ENCODE measurements at regions of chr11 and their contacts with region 1.

Region 1: GRCh38 chr11:60880643-60881282 is 13.4 kb downstream of the ZP1 start:
- DNase-seq: peak; percentile 96
- ATAC-seq: peak; percentile 100
- H3K4me3 ChIP-seq: 0 out of 6 replicates have a peak overlapping the region, but pooled peaks of 1 of the 3 experiments have one; percentile 11
- H3K27ac ChIP-seq: peak overlapping the region; percentile 16
- H3K4me1 ChIP-seq: peaks cover 25% of the 10 kb centered on the region
- H3K27me3 ChIP-seq: no peaks in the 10 kb centered on the region
- CTCF ChIP-seq: 0 out of 2 replicates have a peak, but pooled peaks have one; percentile 17
- EP300 ChIP-seq: peak; percentile 66 to 89; a peak in 3 of 4 replicates
- POLR2A ChIP-seq: no peak
- RAD21 ChIP-seq: no peak

Region 2: DNA sequence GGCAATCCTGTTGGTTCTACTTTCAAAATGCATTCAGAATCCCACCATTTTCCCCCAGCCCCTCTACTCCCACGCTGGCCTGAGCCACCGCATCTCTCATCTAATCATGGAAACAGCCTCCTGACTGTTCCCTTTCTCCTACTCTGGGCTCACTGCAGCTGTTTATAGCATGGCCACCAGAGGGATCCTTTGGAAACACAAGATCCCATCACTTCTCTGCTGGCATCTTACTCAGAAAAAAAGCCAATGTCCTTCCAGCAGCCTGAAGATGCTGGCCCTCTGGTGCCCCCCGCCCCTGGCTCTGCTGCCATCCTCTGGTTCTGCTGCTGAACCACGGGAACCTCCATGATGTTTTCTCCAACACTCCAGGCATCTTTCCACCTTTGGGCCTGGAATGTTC is 170.3 kb before region 1 on chr11:
- CTCF ChIA-PET with region 1: no interaction called
- POLR2A ChIA-PET with region 1: no interaction called
- in situ Hi-C with region 1: no loop called
- intact Hi-C with region 1: no loop called
- DNase-seq: no peak
- ATAC-seq: peak; percentile 74
- H3K4me3 ChIP-seq: no peak overlapping the region
- H3K27ac ChIP-seq: no peak overlapping the region
- H3K4me1 ChIP-seq: no peaks in the 10 kb centered on the region
- H3K27me3 ChIP-seq: peaks cover 0 to 14% of the 10 kb centered on the region in 2 experiments; a peak in 1 of 5 replicates
- CTCF ChIP-seq: no peak
- EP300 ChIP-seq: no peak
- POLR2A ChIP-seq: no peak
- RAD21 ChIP-seq: no peak

Region 3: GRCh38 chr11:60739114-60739513 is 141.6 kb before region 1 on chr11:
- CTCF ChIA-PET with region 1: no interaction called
- POLR2A ChIA-PET with region 1: no interaction called
- in situ Hi-C with region 1: no loop called
- intact Hi-C with region 1: no loop called
- DNase-seq: no peak
- ATAC-seq: peak; percentile 65
- H3K4me3 ChIP-seq: no peak overlapping the region
- H3K27ac ChIP-seq: no peak overlapping the region
- H3K4me1 ChIP-seq: no peaks in the 10 kb centered on the region
- H3K27me3 ChIP-seq: peaks cover 0 to 4% of the 10 kb centered on the region in 2 experiments; a peak in 3 of 5 replicates
- CTCF ChIP-seq: no peak
- EP300 ChIP-seq: no peak
- POLR2A ChIP-seq: no peak
- RAD21 ChIP-seq: no peak

Region 4: GRCh38 chr11:60844045-60844869 is 36.5 kb before region 1 on chr11:
- CTCF ChIA-PET with region 1: no interaction called
- POLR2A ChIA-PET with region 1: interaction called, 4 read pairs
- in situ Hi-C with region 1: no loop called
- intact Hi-C with region 1: loop called (anchors 2 kb)
- DNase-seq: no peak
- ATAC-seq: peak; percentile 53
- H3K4me3 ChIP-seq: peak overlapping the region; percentile 80 to 97 (median 88)
- H3K27ac ChIP-seq: peak overlapping the region; percentile 68
- H3K4me1 ChIP-seq: peaks cover 41% of the 10 kb centered on the region
- H3K27me3 ChIP-seq: no peaks in the 10 kb centered on the region; a peak in 1 of 5 replicates
- CTCF ChIP-seq: no peak
- EP300 ChIP-seq: no peak
- POLR2A ChIP-seq: no peak
- RAD21 ChIP-seq: no peak